ENCODE measurements at regions of chr7 and their contacts with region 1.

Region 1: DNA sequence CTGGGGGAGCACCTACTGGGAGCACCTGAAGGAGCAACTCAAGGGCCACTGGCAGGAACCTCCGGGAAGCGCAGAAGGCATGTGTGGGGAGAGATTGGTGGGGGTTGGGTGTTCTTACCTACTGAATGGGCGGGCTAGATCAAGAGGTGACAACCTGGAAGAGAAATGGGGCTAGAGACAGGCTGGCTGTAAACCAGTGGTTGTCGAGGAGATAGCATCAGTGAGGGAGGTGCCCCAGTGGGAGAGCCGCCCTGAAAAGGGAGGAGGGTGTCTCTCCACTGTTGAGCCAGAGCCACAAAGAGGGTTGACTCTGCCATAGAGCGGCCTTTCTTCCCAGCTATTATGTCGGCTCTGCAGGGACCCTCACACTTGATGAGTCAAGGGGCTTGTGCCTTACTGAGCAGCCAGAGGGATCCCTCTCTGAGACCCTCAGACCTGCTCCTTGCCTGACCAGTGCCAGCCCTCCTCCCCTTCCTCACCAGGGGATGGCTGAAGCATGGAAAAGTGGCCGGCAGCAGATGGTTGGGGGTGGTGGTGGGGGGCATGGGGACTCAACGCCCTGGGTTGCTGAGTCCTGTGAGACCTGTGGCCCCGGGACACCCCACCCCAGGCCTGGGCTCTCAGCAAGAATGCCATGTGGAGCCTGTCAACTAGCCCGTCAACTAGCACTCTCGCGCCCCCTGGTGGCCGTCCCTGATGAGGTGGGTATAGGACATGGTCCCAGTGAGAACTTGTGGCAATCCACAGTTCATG is 36.5 kb upstream of the PURB start:
- DNase-seq: peak; percentile 59
- ATAC-seq: peak; percentile 99
- H3K4me3 ChIP-seq: no peak overlapping the region
- H3K27ac ChIP-seq: no peak overlapping the region
- H3K4me1 ChIP-seq: no peaks in the 10 kb centered on the region
- H3K27me3 ChIP-seq: peaks cover 0 to 3% of the 10 kb centered on the region in 2 experiments; a peak in 1 of 5 replicates
- CTCF ChIP-seq: peak; percentile 91
- EP300 ChIP-seq: no peak
- POLR2A ChIP-seq: no peak
- RAD21 ChIP-seq: peak; percentile 83

Region 2: GRCh38 chr7:44587843-44588711 is 333.7 kb before region 1 on chr7:
- CTCF ChIA-PET with region 1: interaction called, 11 read pairs
- POLR2A ChIA-PET with region 1: no interaction called
- in situ Hi-C with region 1: loop called (anchors 5 kb)
- intact Hi-C with region 1: loop called (anchors 1 kb)
- DNase-seq: peak; percentile 55
- ATAC-seq: peak; percentile 74
- H3K4me3 ChIP-seq: no peak overlapping the region
- H3K27ac ChIP-seq: no peak overlapping the region
- H3K4me1 ChIP-seq: peaks cover 8% of the 10 kb centered on the region
- H3K27me3 ChIP-seq: peaks cover 0 to 11% of the 10 kb centered on the region in 2 experiments; a peak in 1 of 5 replicates
- CTCF ChIP-seq: peak; percentile 76
- EP300 ChIP-seq: no peak
- POLR2A ChIP-seq: no peak
- RAD21 ChIP-seq: 0 out of 2 replicates have a peak, but pooled peaks have one; percentile 25

Region 3: GRCh38 chr7:44769776-44770662 is 151.8 kb before region 1 on chr7:
- CTCF ChIA-PET with region 1: interaction called, 3 read pairs
- POLR2A ChIA-PET with region 1: no interaction called
- in situ Hi-C with region 1: no loop called
- intact Hi-C with region 1: loop called (anchors 1 kb)
- DNase-seq: no peak
- ATAC-seq: peak; percentile 14
- H3K4me3 ChIP-seq: no peak overlapping the region
- H3K27ac ChIP-seq: no peak overlapping the region
- H3K4me1 ChIP-seq: peaks cover 35% of the 10 kb centered on the region
- H3K27me3 ChIP-seq: no peaks in the 10 kb centered on the region
- CTCF ChIP-seq: no peak
- EP300 ChIP-seq: no peak
- POLR2A ChIP-seq: no peak
- RAD21 ChIP-seq: no peak

Region 4: GRCh38 chr7:44824894-44825526 is 96.8 kb before region 1 on chr7:
- CTCF ChIA-PET with region 1: no interaction called
- POLR2A ChIA-PET with region 1: no interaction called
- in situ Hi-C with region 1: no loop called
- intact Hi-C with region 1: no loop called
- DNase-seq: no peak
- ATAC-seq: peak; percentile 14
- H3K4me3 ChIP-seq: no peak overlapping the region
- H3K27ac ChIP-seq: no peak overlapping the region
- H3K4me1 ChIP-seq: no peaks in the 10 kb centered on the region
- H3K27me3 ChIP-seq: no peaks in the 10 kb centered on the region
- CTCF ChIP-seq: no peak
- EP300 ChIP-seq: no peak
- POLR2A ChIP-seq: 0 out of 4 replicates have a peak, but pooled peaks of 1 of the 2 experiments have one; percentile 34
- RAD21 ChIP-seq: no peak

Region 5: GRCh38 chr7:44858161-44858560 is 63.6 kb before region 1 on chr7:
- CTCF ChIA-PET with region 1: interaction called, 13 read pairs
- POLR2A ChIA-PET with region 1: no interaction called
- in situ Hi-C with region 1: loop called (anchors 5 kb)
- intact Hi-C with region 1: loop called (anchors 1 kb)
- DNase-seq: no peak
- ATAC-seq: no peak
- H3K4me3 ChIP-seq: no peak overlapping the region
- H3K27ac ChIP-seq: no peak overlapping the region
- H3K4me1 ChIP-seq: no peaks in the 10 kb centered on the region
- H3K27me3 ChIP-seq: no peaks in the 10 kb centered on the region
- CTCF ChIP-seq: no peak
- EP300 ChIP-seq: no peak
- POLR2A ChIP-seq: no peak
- RAD21 ChIP-seq: no peak

Measured in HepG2 (cell line).